K562 (cell line): ENCODE measurements at regions of chr2 and their contacts with region 1.

Region 1: GRCh38 chr2:209988010-209988409 is 14.4 kb upstream of the RPE start:
- DNase-seq: peak in 2 of 4 experiments; percentile 19 to 32
- ATAC-seq: peak; percentile 55; the same call in 1 of the 3 replicates
- H3K4me3 ChIP-seq: no peak overlapping the region
- H3K27ac ChIP-seq: no peak overlapping the region
- H3K4me1 ChIP-seq: no peaks in the 10 kb centered on the region; a peak in 1 of 5 replicates
- H3K27me3 ChIP-seq: no peaks in the 10 kb centered on the region
- CTCF ChIP-seq: no peak
- EP300 ChIP-seq: peak; percentile 76
- POLR2A ChIP-seq: no peak
- RAD21 ChIP-seq: no peak

Region 2: DNA sequence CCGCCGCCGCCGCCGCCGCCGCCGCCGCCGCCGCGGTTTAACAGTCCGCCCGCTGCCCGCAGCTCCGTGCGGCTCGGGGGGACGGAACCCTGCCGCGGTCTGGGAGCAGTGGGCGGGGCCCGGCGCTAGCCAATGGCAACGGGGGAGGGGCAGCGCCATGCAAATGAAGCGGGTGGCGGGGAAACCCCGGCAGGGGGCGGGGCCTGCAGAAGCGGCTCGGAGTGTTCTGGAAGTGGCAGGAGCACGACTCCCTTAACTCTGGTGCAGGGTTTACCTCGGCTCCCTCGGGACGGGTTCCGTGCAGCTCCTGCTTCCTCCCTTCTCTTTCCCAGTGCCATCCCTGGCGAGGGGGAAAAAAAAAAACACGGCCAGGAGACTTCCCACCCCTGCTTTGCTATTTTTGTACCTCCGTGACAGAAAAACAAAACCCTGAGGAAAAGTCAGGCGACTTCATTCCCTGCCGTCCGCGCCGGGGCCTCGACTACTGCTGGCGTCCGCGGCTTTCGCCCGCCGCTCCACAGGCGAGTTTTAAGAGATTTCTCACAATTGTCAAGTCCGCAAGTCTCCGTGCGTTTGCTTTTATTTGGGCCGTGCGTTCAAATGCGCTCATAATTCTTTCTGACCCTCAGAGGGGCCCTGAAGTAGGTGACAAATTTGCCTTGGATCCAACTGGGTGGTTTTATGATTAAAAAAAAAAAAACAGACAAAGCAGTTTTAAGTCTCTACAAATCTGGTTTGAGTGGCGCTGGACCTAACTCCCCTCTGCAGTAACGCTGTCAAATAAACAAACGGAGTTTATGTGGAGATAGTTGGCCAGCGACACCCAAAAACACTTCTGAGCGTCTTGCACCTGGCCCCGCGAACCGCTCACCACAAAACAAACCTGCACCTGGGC is 183.5 kb after region 1 on chr2 and contains the start of gene KANSL1L:
- CTCF ChIA-PET with region 1: no interaction called
- POLR2A ChIA-PET with region 1: no interaction called
- in situ Hi-C with region 1: no loop called
- intact Hi-C with region 1: loop called (anchors 5 kb)
- DNase-seq: peak; percentile 85 to 93 (median 88)
- ATAC-seq: peak; percentile 89
- H3K4me3 ChIP-seq: peak within 1 kb of the TSS; percentile 72
- H3K27ac ChIP-seq: peak within 1 kb of the TSS; percentile 85
- H3K4me1 ChIP-seq: no peaks in the 10 kb centered on the region
- H3K27me3 ChIP-seq: no peaks in the 10 kb centered on the region
- CTCF ChIP-seq: no peak
- EP300 ChIP-seq: no peak
- POLR2A ChIP-seq: 0 out of 2 replicates have a peak, but pooled peaks have one; percentile 43
- RAD21 ChIP-seq: no peak
- polyA plus RNA-seq, gene KANSL1L: 1.3 to 1.4 TPM